Heart left ventricle (tissue), 16 donors: ENCODE measurements at regions of chr13 and their contacts with region 1.

Region 1: GRCh38 chr13:111177081-111177711 is 62.1 kb downstream of the ARHGEF7 start:
- DNase-seq: peak; percentile 77 to 87 (median 82)
- ATAC-seq: peak; percentile 68 to 91 (median 89)
- H3K4me3 ChIP-seq: no peak overlapping the region
- H3K27ac ChIP-seq: peak overlapping the region; percentile 74 to 94 (median 84)
- H3K4me1 ChIP-seq: peaks cover 18 to 61% (median 46%) of the 10 kb centered on the region in 12 donors
- H3K27me3 ChIP-seq: no peaks in the 10 kb centered on the region
- CTCF ChIP-seq: no peak
- POLR2A ChIP-seq: no peak

Region 2: GRCh38 chr13:111114362-111115060 is 62.7 kb before region 1 on chr13:
- intact Hi-C with region 1: loop called in 1 of 10 experiments (anchors 2 kb)
- DNase-seq: peak; percentile 46 to 79 (median 61)
- ATAC-seq: peak in 3 of 4 donors; percentile 69 to 78 (median 70)
- H3K4me3 ChIP-seq: peak overlapping the region; percentile 39 to 78 (median 64)
- H3K27ac ChIP-seq: peak overlapping the region; percentile 20 to 88 (median 78)
- H3K4me1 ChIP-seq: peaks cover 0 to 22% (median 9%) of the 10 kb centered on the region in 12 donors
- H3K27me3 ChIP-seq: peaks cover 0 to 68% (median 5%) of the 10 kb centered on the region in 9 donors
- CTCF ChIP-seq: no peak
- POLR2A ChIP-seq: no peak

Region 3: DNA sequence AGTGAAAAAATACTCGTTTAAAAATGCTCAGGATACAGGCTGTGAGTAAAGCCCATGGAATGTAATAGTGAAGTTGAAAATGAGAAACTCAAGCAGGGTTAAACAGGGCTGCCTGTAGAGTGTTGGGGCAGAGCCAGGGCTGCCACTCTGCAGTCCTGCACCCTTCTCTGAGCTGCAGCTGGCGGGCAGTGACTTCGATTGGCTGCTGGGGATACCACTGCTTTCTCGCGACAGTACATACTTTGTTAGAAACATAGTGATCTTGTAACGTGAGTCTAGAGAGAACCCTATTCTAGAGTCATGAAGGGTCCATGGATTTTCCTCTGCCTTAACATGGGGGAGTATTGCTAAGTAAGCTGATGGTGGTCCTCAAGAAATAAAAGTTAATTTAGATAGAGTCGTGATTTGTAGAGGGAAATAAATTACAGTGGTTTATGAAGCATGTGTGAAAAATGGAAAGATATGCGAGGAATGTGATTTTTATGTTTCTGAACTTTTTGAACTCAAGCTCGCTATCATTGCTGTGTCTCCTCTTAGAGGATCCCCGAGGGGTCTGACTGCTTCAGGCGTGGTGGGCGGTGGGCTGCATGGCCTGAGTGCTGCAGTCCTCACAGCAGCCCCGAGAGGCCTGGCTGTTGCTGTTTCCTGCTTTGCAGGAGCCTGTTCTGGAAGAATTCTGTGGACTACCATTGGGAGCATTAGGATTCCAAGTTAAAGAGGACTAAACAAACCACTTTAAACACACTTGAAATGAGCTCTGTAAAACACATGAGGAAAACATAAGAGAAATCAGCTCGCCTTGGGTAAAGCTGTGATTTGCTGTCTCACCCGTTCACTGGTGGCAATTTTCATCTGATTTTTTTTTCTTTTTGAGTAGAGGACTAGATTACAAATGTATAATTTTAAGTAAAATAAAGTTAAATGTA is 33.6 kb after region 1 on chr13:
- intact Hi-C with region 1: loop called in 2 of 10 experiments (anchors 5 kb)
- DNase-seq: peak in 2 of 5 donors; percentile 53 to 66
- ATAC-seq: peak; percentile 48 to 80 (median 66)
- H3K4me3 ChIP-seq: peak overlapping the region in 5 of 12 donors; percentile 3 to 25 (median 12)
- H3K27ac ChIP-seq: peak overlapping the region in 7 of 12 donors; percentile 0 to 56 (median 18)
- H3K4me1 ChIP-seq: peaks cover 3 to 86% (median 73%) of the 10 kb centered on the region in 12 donors
- H3K27me3 ChIP-seq: no peaks in the 10 kb centered on the region
- CTCF ChIP-seq: no peak
- POLR2A ChIP-seq: no peak

Region 4: GRCh38 chr13:111216166-111216960 is 39.2 kb after region 1 on chr13:
- intact Hi-C with region 1: loop called in 2 of 10 experiments (anchors 5 kb)
- DNase-seq: peak in 1 of 5 donors; percentile 37
- ATAC-seq: peak; percentile 40 to 61 (median 43)
- H3K4me3 ChIP-seq: no peak overlapping the region
- H3K27ac ChIP-seq: peak overlapping the region in 9 of 12 donors; percentile 8 to 65 (median 22)
- H3K4me1 ChIP-seq: peaks cover 0 to 92% (median 73%) of the 10 kb centered on the region in 12 donors
- H3K27me3 ChIP-seq: no peaks in the 10 kb centered on the region
- CTCF ChIP-seq: peak in 11 of 12 donors; percentile 19 to 57 (median 42)
- POLR2A ChIP-seq: no peak